Heart left ventricle (tissue), 16 donors: ENCODE measurements at regions of chr11 and their contacts with region 1.

Region 1: GRCh38 chr11:118488480-118489109 is 38.7 kb upstream of the TTC36 start:
- DNase-seq: peak; percentile 36 to 70 (median 57)
- ATAC-seq: peak in 3 of 4 donors; percentile 42 to 62 (median 58)
- H3K4me3 ChIP-seq: no peak overlapping the region
- H3K27ac ChIP-seq: no peak overlapping the region
- H3K4me1 ChIP-seq: peaks cover 0 to 14% (median 0%) of the 10 kb centered on the region in 12 donors
- H3K27me3 ChIP-seq: no peaks in the 10 kb centered on the region
- CTCF ChIP-seq: peak; percentile 55 to 89 (median 81)
- POLR2A ChIP-seq: no peak

Region 2: GRCh38 chr11:118145285-118146227 is 343.0 kb before region 1 on chr11:
- intact Hi-C with region 1: loop called in 6 of 10 experiments (anchors 2 to 10 kb)
- DNase-seq: peak; percentile 83 to 93 (median 87)
- ATAC-seq: peak; percentile 81 to 90 (median 86)
- H3K4me3 ChIP-seq: peak overlapping the region; percentile 22 to 92 (median 60)
- H3K27ac ChIP-seq: peak overlapping the region in 10 of 12 donors; percentile 41 to 80 (median 74)
- H3K4me1 ChIP-seq: peaks cover 0 to 60% (median 21%) of the 10 kb centered on the region in 12 donors
- H3K27me3 ChIP-seq: peaks cover 0 to under 1% (median 0%) of the 10 kb centered on the region in 9 donors
- CTCF ChIP-seq: peak; percentile 85 to 97 (median 94)
- POLR2A ChIP-seq: peak in 1 of 2 donors; percentile 28

Region 3: GRCh38 chr11:118295834-118296454 is 192.7 kb before region 1 on chr11:
- intact Hi-C with region 1: loop called in 3 of 10 experiments (anchors 2 to 5 kb)
- DNase-seq: no peak
- ATAC-seq: peak in 1 of 4 donors; percentile 47
- H3K4me3 ChIP-seq: no peak overlapping the region
- H3K27ac ChIP-seq: no peak overlapping the region
- H3K4me1 ChIP-seq: no peaks in the 10 kb centered on the region
- H3K27me3 ChIP-seq: no peaks in the 10 kb centered on the region
- CTCF ChIP-seq: peak; percentile 27 to 67 (median 52)
- POLR2A ChIP-seq: no peak

Region 4: DNA sequence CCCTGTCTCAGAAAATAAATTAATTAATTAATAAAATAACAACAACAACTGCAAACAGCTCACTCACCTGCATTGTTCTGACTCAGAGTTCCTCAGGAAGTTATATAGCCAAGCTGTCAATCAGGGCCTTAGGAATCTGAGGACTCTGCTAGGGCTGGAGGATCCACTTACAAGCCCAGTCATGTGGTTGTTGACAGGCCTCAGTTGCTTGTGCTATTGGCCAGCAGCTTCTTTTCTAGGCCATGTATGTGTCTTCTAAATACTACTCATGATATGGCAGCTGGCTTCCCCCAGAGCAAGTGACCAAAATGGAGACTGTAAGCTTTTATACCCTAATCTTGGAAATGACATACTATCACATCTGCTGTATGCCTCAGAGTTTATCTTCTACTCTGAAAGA is 108.0 kb before region 1 on chr11:
- intact Hi-C with region 1: loop called in 2 of 10 experiments (anchors 5 to 10 kb)
- DNase-seq: no peak
- ATAC-seq: peak in 2 of 4 donors; percentile 36 to 52
- H3K4me3 ChIP-seq: no peak overlapping the region
- H3K27ac ChIP-seq: peak overlapping the region in 3 of 12 donors; percentile 3 to 10 (median 5)
- H3K4me1 ChIP-seq: peaks cover 0 to 2% (median 0%) of the 10 kb centered on the region in 12 donors
- H3K27me3 ChIP-seq: no peaks in the 10 kb centered on the region
- CTCF ChIP-seq: no peak
- POLR2A ChIP-seq: no peak

Region 5: DNA sequence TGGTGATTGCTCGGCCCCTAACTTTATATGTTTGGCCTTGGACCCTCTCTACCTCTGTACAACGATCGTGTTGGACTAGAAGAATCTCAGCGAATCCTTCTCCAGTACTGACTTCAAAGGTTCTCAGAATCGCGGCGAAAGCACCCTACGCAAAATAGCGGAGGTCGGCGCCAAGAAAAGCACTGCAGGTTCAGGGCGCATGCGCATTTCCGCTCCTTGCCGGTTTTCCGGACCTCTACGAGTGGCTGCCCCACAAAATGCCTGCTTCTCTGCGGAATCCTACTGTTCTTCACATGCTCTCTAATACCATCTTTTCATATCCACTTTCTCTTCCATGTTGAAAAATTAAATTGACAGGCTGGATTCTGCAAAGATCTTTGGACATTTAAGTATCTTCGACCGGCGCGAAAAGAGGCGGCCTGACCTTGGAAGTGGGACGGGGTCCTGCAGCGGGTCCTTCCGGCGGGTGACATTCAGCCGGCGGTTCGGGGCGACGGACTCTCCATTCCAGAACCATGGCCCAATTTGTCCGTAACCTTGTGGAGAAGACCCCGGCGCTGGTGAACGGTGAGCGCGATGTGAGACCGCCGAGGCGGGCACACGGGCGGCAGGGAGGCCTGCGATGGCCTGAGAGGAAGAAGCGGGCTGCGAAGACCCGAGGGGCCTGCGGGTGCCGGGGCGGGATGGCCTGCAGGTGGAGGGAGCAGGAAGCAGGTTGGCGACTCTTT is 87.3 kb before region 1 on chr11 and contains the start of gene ATP5MG:
- intact Hi-C with region 1: loop called (anchors 1 to 5 kb)
- DNase-seq: peak; percentile 92 to 95 (median 95)
- ATAC-seq: peak; percentile 76 to 90 (median 86)
- H3K4me3 ChIP-seq: peak within 1 kb of the TSS; percentile 76 to 98 (median 83)
- H3K27ac ChIP-seq: peak within 1 kb of the TSS; percentile 88 to 95 (median 93)
- H3K4me1 ChIP-seq: peaks cover 2 to 50% (median 41%) of the 10 kb centered on the region in 12 donors
- H3K27me3 ChIP-seq: no peaks in the 10 kb centered on the region
- CTCF ChIP-seq: peak in 5 of 12 donors; percentile 11 to 39 (median 36)
- POLR2A ChIP-seq: peak in 1 of 2 donors; percentile 68
- total RNA-seq, gene ATP5MG: 96.4 to 702 (median 559) TPM

Region 6: DNA sequence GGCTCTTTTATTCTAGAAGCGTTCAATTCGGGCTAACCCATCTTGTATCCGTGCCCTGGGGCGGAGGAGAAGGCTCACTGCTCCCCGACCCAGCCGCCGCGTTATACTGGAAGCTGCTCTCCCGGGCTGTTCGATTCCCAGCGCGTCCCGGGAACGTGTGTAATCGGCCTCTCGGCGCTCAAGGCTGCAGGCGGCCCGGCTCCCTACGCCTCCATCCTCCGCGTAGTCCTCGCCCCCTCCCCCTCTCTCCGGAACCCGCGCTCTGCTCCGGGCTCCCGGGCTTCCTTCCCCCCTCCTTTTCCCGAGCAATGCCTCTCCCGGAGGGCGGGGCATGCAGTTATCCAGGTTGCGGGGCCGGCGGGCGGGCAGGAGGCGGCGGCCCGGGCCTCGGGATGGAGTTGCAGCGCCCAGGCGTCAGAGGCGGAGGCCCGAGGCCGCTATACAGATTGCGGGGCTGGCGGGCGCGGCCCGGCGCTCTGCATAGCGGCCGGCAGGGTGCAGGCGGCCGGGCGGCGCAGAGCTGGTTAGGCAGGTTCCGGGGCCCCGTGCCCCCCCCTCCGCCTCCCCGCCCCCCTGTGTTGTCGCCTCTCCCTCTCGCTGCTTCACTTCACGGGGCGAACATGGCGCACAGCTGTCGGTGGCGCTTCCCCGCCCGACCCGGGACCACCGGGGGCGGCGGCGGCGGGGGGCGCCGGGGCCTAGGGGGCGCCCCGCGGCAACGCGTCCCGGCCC is 52.5 kb before region 1 on chr11 and contains the start of gene KMT2A:
- intact Hi-C with region 1: loop called in 4 of 10 experiments (anchors 5 to 10 kb)
- DNase-seq: peak; percentile 98 to 99 (median 99)
- ATAC-seq: peak; percentile 93 to 96 (median 94)
- H3K4me3 ChIP-seq: peak within 1 kb of the TSS; percentile 81 to 99 (median 96)
- H3K27ac ChIP-seq: peak within 1 kb of the TSS; percentile 78 to 96 (median 90)
- H3K4me1 ChIP-seq: peaks cover 0 to 57% (median 34%) of the 10 kb centered on the region in 12 donors
- H3K27me3 ChIP-seq: no peaks in the 10 kb centered on the region
- CTCF ChIP-seq: peak in 1 of 12 donors; percentile 8
- POLR2A ChIP-seq: peak in 1 of 2 donors; percentile 50
- total RNA-seq, gene KMT2A: 16.5 to 117 (median 41.5) TPM

Region 7: DNA sequence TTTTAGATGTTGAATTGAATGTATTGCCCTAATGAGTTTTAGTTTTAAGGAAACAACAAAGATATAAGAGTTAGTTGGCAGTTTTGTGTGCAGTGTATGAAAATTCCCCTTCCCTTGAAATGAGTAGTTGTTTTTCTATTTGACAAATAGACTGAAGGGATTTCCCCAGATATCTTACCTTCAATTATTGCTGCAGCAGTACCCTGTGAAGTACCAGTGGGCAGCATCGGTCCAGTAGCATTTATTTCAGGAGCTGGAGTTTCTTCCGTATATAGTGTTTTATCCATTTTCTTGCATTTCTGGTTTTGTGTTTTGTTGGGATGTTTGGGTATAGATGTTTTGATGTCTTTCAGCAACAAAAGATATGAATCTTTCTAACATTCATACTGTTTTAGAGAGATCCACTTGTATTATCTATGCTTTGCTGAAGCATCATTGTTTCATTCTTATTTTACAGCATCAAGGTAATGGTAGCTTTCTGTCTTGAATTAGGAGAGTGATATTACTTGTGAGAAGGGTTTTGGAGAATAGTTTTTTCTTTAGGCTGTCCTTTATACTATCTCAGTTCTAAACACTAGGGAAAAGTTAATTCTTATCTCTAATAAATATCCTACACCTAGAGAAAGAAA is 44.9 kb before region 1 on chr11:
- intact Hi-C with region 1: loop called in 4 of 10 experiments (anchors 5 to 10 kb)
- DNase-seq: no peak
- ATAC-seq: no peak
- H3K4me3 ChIP-seq: no peak overlapping the region
- H3K27ac ChIP-seq: no peak overlapping the region
- H3K4me1 ChIP-seq: peaks cover 0 to 70% (median 51%) of the 10 kb centered on the region in 12 donors
- H3K27me3 ChIP-seq: no peaks in the 10 kb centered on the region
- CTCF ChIP-seq: no peak
- POLR2A ChIP-seq: no peak